Activated B cell treated with CpG ODN at 0.5 μM for 24 hours (primary cell): ENCODE measurements at regions of chr11 and their contacts with region 1.

Region 1: GRCh38 chr11:9972989-9973388 is 309.1 kb downstream of the SWAP70 start:
- DNase-seq: no peak
- ATAC-seq: peak; percentile 66
- H3K4me3 Mint-ChIP-seq: no peak overlapping the region
- H3K27ac Mint-ChIP-seq: no peak overlapping the region
- H3K4me1 Mint-ChIP-seq: peaks cover 6% of the 10 kb centered on the region
- H3K27me3 Mint-ChIP-seq: no peaks in the 10 kb centered on the region
- CTCF ChIP-seq: no peak

Region 2: GRCh38 chr11:9158898-9159391 is 814.0 kb before region 1 on chr11:
- CTCF ChIA-PET with region 1: no interaction called
- POLR2A ChIA-PET with region 1: no interaction called
- intact Hi-C with region 1: loop called (anchors 10 kb)
- DNase-seq: no peak
- ATAC-seq: no peak
- H3K4me3 Mint-ChIP-seq: no peak overlapping the region
- H3K27ac Mint-ChIP-seq: no peak overlapping the region
- H3K4me1 Mint-ChIP-seq: peaks cover 6% of the 10 kb centered on the region
- H3K27me3 Mint-ChIP-seq: no peaks in the 10 kb centered on the region
- CTCF ChIP-seq: no peak

Region 3: DNA sequence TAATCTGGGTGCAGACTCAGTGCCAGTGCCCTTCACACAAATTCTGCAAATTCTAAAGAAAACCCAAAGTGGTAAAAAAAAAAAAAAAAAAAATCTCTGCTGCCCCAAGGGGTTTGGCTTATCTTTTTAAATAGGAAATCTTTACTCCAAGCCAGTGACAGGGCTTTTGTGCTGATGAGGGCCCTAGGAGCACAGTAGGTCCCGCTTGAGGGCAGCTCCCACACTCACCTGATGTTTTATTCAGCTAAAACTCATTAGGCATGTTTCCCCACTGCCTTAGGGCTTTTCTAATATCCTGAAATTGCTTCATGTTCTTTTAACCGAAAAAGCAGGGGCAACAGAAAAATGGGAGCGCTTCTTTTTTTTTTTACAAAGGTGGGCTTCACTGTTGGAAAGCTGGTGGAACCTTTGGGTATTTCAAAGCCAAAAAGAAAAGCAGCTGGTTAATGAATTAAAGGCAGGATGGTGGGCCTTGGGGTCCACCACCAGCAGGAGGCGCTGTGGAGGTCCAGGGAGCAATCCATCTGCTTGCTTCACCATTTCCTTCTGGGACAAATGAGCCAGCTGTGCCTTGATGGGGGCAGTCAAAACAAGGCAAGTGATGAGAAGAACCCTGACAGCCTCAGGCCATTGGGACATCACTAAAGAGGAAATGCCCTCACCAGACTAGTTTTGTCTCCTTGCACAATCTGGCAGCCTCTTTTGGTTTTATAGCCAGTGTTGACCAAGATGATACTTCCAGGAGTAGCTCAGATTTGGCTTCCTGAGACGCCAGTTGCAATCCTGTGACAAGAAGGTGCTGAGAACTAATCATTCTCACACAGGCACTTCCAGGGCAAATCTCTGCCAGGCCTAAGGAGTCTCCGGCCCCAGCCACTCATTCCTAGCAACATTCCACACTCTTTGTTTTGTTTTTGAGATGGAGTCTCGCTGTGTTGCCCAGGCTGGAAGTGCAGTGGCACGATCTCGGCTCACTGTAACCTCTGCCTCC is 437.9 kb before region 1 on chr11:
- CTCF ChIA-PET with region 1: interaction called, 18 read pairs
- POLR2A ChIA-PET with region 1: no interaction called
- intact Hi-C with region 1: loop called (anchors 1 kb)
- DNase-seq: peak; percentile 71
- ATAC-seq: peak; percentile 71
- H3K4me3 Mint-ChIP-seq: no peak overlapping the region
- H3K27ac Mint-ChIP-seq: no peak overlapping the region
- H3K4me1 Mint-ChIP-seq: peaks cover 5% of the 10 kb centered on the region
- H3K27me3 Mint-ChIP-seq: no peaks in the 10 kb centered on the region
- CTCF ChIP-seq: no peak

Region 4: DNA sequence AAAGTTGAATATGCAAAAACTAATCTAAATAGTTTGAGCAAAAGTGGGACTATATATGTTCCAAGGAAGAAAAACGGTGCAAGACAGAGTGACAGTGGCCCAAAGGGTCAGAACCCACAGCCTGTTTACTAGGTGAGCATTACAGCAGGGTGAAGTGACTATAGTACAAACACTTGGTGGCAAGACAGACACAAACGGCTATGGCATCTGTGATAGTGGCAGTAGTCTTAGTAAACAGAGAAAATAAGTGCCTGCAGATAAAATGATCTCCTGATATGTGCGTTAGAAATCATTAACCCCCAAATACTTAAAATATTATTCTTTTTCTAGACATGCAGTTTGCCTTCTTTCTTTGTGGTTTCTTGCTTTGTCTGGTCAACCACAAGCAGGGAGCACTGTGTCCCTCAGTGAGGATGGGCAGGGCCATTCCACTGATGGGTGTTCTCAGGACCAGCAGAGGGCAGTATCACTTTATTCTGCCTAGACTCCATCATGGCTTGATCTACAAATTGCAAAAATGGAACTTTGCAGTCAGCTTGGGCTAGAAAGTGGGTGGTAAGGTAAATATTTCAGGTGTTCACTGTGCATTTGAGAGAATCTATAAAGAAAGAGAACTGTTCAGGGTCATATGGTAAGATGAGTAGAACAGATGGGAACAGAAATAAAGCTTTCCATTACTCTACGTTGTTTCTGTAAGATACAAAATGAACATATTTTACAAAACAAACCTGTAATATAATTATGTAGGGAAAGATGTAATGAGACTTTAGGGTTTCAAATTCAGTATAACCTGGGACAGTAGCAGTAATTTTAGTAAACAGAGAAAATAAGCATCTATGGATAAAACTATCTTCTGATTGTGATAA is 110.9 kb before region 1 on chr11:
- CTCF ChIA-PET with region 1: interaction called, 5 read pairs
- POLR2A ChIA-PET with region 1: no interaction called
- intact Hi-C with region 1: loop called (anchors 1 kb)
- DNase-seq: no peak
- ATAC-seq: peak; percentile 82
- H3K4me3 Mint-ChIP-seq: no peak overlapping the region
- H3K27ac Mint-ChIP-seq: no peak overlapping the region
- H3K4me1 Mint-ChIP-seq: peaks cover 31% of the 10 kb centered on the region
- H3K27me3 Mint-ChIP-seq: no peaks in the 10 kb centered on the region
- CTCF ChIP-seq: no peak

Region 5: GRCh38 chr11:10076458-10077141 is 103.6 kb after region 1 on chr11:
- CTCF ChIA-PET with region 1: interaction called, 3 read pairs
- POLR2A ChIA-PET with region 1: no interaction called
- intact Hi-C with region 1: loop called (anchors 5 kb)
- DNase-seq: peak; percentile 28
- ATAC-seq: peak; percentile 49
- H3K4me3 Mint-ChIP-seq: no peak overlapping the region
- H3K27ac Mint-ChIP-seq: no peak overlapping the region
- H3K4me1 Mint-ChIP-seq: no peaks in the 10 kb centered on the region
- H3K27me3 Mint-ChIP-seq: no peaks in the 10 kb centered on the region
- CTCF ChIP-seq: no peak

Region 6: GRCh38 chr11:10322830-10323792 is 350.1 kb after region 1 on chr11:
- CTCF ChIA-PET with region 1: interaction called, 3 read pairs
- POLR2A ChIA-PET with region 1: no interaction called
- intact Hi-C with region 1: loop called (anchors 1 kb)
- DNase-seq: no peak
- ATAC-seq: peak; percentile 69
- H3K4me3 Mint-ChIP-seq: no peak overlapping the region
- H3K27ac Mint-ChIP-seq: peak overlapping the region; percentile 67
- H3K4me1 Mint-ChIP-seq: peaks cover 14% of the 10 kb centered on the region
- H3K27me3 Mint-ChIP-seq: peaks cover 11% of the 10 kb centered on the region
- CTCF ChIP-seq: no peak